Ascending aorta (tissue), 2 donors: ENCODE measurements at regions of chr2 and their contacts with region 1.

Region 1: GRCh38 chr2:70086838-70087701 is at the start of gene PCBP1:
- DNase-seq: peak; percentile 74 to 96
- H3K4me3 ChIP-seq: peak within 1 kb of the TSS; percentile 78 to 91
- H3K27ac ChIP-seq: peak within 1 kb of the TSS; percentile 98 to 99
- H3K4me1 ChIP-seq: peaks cover 5 to 29% of the 10 kb centered on the region in 2 donors
- H3K27me3 ChIP-seq: no peaks in the 10 kb centered on the region
- CTCF ChIP-seq: no peak
- total RNA-seq, gene PCBP1: 227 TPM

Region 2: DNA sequence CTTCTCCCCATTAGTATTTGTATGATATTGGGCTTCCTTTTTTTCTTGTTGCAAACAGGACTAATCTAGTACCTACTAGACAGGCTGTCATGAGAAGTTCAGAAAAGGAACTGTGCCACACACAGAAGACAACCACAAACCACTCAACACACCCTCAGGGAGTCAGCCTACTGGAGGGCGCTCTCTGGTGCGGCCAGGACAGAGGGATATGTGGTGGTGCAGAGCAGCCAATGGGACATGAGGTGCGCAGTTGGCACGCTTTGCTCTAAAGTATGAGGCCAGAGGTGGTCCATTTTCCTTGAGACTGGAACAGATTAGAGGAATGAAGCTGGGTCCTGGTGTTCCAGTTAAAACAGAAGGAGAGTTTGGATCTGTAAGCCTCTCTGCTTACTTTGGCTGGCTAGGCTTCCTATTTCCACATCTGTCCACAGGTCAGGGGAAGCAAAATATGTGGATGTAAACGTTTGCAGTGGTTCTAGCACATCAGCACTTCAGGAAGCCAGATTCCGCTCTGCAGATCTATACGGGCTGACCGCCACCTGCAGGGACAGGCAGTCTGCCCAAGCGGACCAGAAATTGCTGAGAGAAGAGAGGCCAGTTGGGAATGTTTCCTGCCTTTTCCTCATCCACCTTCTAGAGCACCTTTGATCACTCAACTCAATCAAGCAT is 814.1 kb before region 1 on chr2:
- intact Hi-C with region 1: no loop called
- DNase-seq: no peak
- H3K4me3 ChIP-seq: no peak overlapping the region
- H3K27ac ChIP-seq: peak overlapping the region in 1 of 2 donors; percentile 9
- H3K4me1 ChIP-seq: peaks cover 3 to 19% of the 10 kb centered on the region in 2 donors
- H3K27me3 ChIP-seq: no peaks in the 10 kb centered on the region
- CTCF ChIP-seq: no peak

Region 3: GRCh38 chr2:69985688-69986087 is 101.4 kb before region 1 on chr2:
- intact Hi-C with region 1: no loop called
- DNase-seq: peak; percentile 43 to 80
- H3K4me3 ChIP-seq: no peak overlapping the region
- H3K27ac ChIP-seq: no peak overlapping the region
- H3K4me1 ChIP-seq: no peaks in the 10 kb centered on the region
- H3K27me3 ChIP-seq: no peaks in the 10 kb centered on the region
- CTCF ChIP-seq: no peak

Region 4: DNA sequence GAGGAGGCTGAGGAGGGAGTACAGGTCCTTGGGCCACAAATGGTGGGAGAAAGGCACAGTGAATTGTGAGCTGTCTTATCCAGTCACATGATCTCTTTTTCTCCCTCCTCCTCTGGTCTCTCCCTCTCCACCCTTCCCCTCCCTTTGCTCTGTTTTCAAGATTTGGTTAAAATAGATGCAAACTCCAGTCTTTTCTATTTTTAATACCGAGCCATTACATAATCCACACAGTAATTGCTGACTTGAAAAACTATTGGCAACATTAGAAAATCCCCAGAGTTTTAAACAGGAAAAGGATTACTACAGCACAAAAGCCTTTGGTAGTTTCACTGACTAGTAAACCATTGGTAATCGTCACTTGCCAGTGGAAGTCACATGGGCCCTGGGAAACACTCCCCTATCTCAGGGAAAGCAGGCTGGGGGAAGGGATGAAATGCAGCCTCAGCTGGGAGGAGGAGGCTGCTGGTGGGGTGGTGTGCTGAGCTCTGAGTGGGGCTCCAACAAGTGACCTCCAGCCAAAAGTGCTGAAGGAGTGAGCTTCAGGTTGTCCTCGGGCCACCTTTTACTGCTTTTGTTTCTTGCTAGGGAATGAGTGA is 57.2 kb before region 1 on chr2:
- intact Hi-C with region 1: loop called (anchors 5 kb)
- DNase-seq: peak; percentile 51 to 90
- H3K4me3 ChIP-seq: peak overlapping the region in 1 of 2 donors; percentile 12
- H3K27ac ChIP-seq: peak overlapping the region; percentile 85 to 89
- H3K4me1 ChIP-seq: peaks cover 0 to 16% of the 10 kb centered on the region in 2 donors
- H3K27me3 ChIP-seq: no peaks in the 10 kb centered on the region
- CTCF ChIP-seq: no peak

Region 5: GRCh38 chr2:70070541-70071268 is 16.4 kb before region 1 on chr2:
- intact Hi-C with region 1: loop called (anchors 2 kb)
- DNase-seq: peak in 1 of 2 donors; percentile 87
- H3K4me3 ChIP-seq: peak overlapping the region in 1 of 2 donors; percentile 40
- H3K27ac ChIP-seq: peak overlapping the region; percentile 75 to 77
- H3K4me1 ChIP-seq: peaks cover 0 to 16% of the 10 kb centered on the region in 2 donors
- H3K27me3 ChIP-seq: no peaks in the 10 kb centered on the region
- CTCF ChIP-seq: peak; percentile 85 to 92 (median 88)

Region 6: DNA sequence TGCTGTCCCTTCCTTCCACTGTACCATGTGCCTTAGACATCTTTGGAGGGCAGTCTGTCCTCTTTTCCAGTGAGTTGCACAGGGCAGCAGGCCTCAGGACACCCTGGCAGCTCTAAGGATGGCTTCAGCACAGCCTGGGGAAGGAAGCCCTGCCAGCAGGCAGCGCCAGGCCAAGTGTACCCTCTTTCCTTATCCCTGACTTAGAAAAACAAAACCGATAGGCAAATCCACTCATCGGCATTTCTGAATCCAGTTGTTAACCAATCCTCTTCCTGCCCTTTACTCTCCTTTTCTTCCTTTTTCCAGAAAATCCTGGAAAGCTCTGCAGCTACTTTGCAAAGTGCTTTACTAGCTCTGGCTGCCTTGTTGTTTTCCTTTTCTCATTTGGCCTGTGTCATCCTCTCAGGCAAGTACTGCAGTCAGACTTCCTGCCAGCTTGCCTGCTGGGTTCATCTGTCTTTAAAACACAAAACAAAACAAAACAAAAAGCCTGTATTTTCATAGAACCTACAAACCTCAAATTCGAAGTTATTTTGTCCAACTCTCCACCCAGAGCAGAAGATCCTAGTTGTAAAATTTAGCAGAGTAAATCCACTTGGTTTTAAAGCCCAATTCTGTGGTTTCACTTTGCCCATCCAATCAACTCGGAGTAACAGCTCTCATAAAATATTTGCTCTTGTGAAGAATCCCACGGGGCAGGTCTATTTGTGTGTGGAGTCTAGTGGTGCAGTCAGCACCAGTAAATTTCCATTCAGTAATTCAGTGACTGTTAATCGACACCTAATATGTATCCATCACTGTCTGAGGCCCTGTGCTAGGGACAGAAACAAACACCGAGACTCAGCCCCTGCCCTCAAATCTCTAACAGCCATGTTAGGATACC is 45.4 kb after region 1 on chr2:
- intact Hi-C with region 1: loop called (anchors 2 kb)
- DNase-seq: no peak
- H3K4me3 ChIP-seq: peak overlapping the region; percentile 31 to 47
- H3K27ac ChIP-seq: peak overlapping the region; percentile 90 to 93
- H3K4me1 ChIP-seq: peaks cover 12 to 34% of the 10 kb centered on the region in 2 donors
- H3K27me3 ChIP-seq: no peaks in the 10 kb centered on the region
- CTCF ChIP-seq: no peak

Region 7: GRCh38 chr2:70190418-70191243 is 103.6 kb after region 1 on chr2 and contains the start of gene C2orf42:
- intact Hi-C with region 1: loop called (anchors 2 kb)
- DNase-seq: peak; percentile 85 to 98
- H3K4me3 ChIP-seq: peak within 1 kb of the TSS; percentile 67 to 82
- H3K27ac ChIP-seq: peak within 1 kb of the TSS; percentile 96 to 97
- H3K4me1 ChIP-seq: peaks cover 0 to 4% of the 10 kb centered on the region in 2 donors
- H3K27me3 ChIP-seq: no peaks in the 10 kb centered on the region
- CTCF ChIP-seq: no peak
- total RNA-seq, gene C2orf42: 9.5 TPM

Region 8: DNA sequence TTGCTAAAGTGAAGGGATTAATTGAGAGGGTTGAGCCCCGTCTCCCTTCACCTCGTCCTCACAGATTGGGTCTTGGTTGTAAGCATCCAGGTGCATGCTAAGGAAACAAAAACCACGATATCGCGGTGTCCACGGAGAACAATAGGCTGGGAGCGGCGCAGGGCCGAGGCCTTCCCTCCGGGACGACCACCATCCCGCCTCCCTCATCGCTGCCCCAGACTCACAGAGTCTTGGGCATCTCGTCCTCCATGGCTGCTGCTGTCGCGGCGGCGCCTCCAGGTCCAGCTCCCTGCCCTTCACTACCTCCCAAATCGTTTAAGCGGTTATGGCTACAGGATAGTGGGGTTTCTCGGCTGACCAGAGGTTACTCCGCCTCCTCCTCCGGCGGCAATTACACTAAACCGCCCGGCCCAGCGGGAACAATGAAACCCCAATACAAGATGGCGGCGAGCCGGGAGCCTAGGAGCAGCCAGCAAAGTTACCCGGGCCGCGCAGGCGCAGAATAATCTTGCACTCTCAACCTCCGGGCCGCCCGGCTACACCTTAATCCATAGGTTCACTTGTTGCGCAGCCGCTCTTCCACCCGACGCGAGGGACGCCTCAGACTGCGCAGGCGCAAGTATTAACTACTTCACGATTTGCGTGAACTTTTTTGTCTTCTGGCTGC is 161.2 kb after region 1 on chr2 and contains the start of gene TIA1:
- intact Hi-C with region 1: loop called (anchors 5 kb)
- DNase-seq: peak; percentile 93 to 99
- H3K4me3 ChIP-seq: peak within 1 kb of the TSS; percentile 69 to 70
- H3K27ac ChIP-seq: peak within 1 kb of the TSS; percentile 87 to 88
- H3K4me1 ChIP-seq: peaks cover 0 to 9% of the 10 kb centered on the region in 2 donors
- H3K27me3 ChIP-seq: no peaks in the 10 kb centered on the region
- CTCF ChIP-seq: no peak
- total RNA-seq, gene TIA1: 19.3 TPM